ENCODE measurements at regions of chr5 and their contacts with region 1.

Region 1: GRCh38 chr5:58466939-58467338 is 7.1 kb upstream of the PLK2 start:
- DNase-seq: peak; percentile 40
- CTCF ChIP-seq: no peak

Region 2: DNA sequence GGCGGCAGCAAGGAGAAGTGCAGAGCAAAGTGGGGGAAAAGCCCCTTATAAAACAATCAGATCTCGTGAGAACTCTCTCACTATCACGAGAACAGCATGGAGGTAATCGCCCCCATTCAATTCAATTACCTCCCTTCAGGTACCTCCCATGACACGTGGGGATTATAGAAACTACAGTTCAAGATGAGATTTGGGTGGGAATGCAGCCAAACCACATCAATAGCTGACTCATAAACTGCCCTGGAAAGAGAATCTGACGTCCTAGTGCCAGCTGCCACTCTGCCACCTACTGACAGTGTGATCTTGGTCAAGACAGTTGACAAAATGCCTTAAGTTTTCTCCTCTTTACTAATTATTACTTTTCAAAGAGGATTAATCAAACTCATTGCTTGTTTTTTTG is 1164.8 kb before region 1 on chr5:
- in situ Hi-C with region 1: loop called (anchors 5 kb)
- DNase-seq: no peak
- CTCF ChIP-seq: no peak

Region 3: GRCh38 chr5:58127479-58128220 is 339.3 kb before region 1 on chr5:
- in situ Hi-C with region 1: no loop called
- DNase-seq: no peak
- CTCF ChIP-seq: no peak

Region 4: DNA sequence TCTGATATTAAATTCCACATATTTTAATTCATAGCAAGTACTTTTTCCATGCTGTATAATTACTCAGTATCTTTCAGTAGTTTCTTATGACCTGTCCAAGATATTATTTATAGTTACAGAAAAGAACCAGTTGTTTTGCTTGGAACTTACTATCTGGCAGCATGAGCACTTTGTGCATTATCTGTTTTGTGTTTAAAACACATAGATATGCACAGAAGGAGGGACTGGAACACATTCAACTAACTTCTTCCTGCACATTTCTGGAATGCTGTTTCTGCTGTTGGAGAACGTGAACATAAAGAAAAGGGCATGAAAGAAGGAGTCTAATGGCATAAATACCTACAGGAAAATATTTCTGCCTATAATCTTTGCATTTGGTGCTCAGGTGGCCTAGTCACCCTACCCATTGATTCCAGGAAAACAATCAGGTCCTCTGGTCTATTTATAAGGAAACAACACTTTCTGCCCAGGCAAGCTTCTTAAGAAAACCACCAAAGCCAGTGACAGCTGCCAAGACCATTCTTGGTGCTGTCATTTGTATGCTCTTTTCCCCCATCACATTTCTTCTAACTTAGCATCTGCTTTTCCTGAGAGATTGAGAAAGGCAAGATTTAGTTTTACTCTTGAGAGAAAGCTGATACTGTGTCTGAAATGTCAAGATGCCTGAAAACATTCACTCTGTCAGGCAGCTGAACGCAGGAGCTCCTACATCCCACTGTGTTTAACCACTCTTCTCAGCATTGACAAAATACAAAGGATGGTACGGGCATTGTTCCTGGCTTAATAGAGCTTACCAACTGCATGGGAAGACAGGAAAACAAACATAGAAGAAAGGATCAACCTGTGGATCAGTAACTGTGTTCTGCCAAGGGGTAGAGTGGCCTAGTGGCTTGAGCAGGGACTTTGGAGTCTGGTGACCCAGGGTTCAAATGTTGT is 156.3 kb after region 1 on chr5:
- in situ Hi-C with region 1: no loop called
- DNase-seq: no peak
- CTCF ChIP-seq: no peak